Activated CD4-positive, alpha-beta memory T cell treated with anti-CD3 and anti-CD28 coated beads for 36 hours (primary cell): ENCODE measurements at regions of chr17 and their contacts with region 1.

Region 1: GRCh38 chr17:781805-782731 is at the starts of genes GLOD4 and MRM3:
- DNase-seq: peak; percentile 95
- H3K4me3 Mint-ChIP-seq: peak within 1 kb of the TSS; percentile 97
- H3K27ac Mint-ChIP-seq: peak within 1 kb of the TSS; percentile 93
- H3K4me1 Mint-ChIP-seq: peaks cover 37% of the 10 kb centered on the region
- H3K27me3 Mint-ChIP-seq: no peaks in the 10 kb centered on the region
- total RNA-seq, gene GLOD4: 56.3 to 66.5 TPM
- total RNA-seq, gene MRM3: 24.6 to 26.1 TPM

Region 2: DNA sequence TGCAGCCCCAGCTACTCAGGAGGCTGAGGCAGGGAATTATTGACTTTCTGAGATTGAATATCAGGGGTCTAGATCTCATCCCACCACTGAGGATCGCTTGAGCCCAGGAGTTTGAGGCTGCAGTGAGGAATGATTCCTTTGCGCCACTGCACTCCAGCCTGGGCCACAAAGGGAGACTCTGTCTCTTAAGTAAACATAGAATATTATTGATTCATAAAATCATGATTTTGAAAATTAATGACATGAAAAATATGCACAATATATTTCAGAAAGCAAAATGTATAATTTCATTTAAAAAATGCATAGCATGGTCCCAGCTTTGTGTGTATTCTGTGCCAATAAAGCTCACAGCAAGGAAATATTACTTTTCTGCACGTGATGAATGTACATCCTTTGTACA is 65.8 kb before region 1 on chr17:
- CTCF ChIA-PET with region 1: no interaction called
- POLR2A ChIA-PET with region 1: no interaction called
- intact Hi-C with region 1: loop called (anchors 10 kb)
- DNase-seq: no peak
- H3K4me3 Mint-ChIP-seq: no peak overlapping the region
- H3K27ac Mint-ChIP-seq: no peak overlapping the region
- H3K4me1 Mint-ChIP-seq: peaks cover 23% of the 10 kb centered on the region
- H3K27me3 Mint-ChIP-seq: no peaks in the 10 kb centered on the region

Region 3: DNA sequence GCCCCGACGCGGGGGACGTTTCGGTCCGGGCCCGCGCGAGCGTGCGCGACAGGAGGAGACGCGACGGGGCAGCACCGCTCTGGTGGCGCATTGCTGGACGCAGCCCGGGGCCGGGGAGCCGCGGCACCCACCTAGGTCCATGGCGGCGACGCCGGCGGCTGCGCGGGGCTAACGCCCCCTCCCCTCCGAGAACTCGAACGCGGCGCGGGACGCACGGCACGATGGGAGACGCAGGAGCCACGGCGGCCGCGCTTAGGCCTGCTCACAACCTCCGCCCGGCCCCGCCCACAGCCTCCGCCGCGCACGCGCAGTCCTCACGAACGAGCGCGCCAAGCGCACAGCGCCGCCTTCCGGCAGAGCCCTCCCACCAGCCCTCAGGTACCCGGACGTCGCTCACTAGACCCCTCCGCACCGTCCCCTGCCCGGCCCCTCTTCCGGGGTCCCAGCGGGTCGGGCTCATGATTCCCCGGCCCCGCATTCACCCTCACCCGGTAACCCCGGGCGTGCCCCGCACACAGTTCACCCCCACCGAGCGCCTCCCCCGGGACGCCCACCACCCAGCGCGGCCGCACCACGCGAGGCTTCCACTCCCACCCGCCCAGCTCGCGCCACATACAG is 30.0 kb before region 1 on chr17 and contains the start of gene GEMIN4:
- CTCF ChIA-PET with region 1: interaction called, 12 read pairs
- POLR2A ChIA-PET with region 1: interaction called, 12 read pairs
- intact Hi-C with region 1: loop called (anchors 2 kb)
- DNase-seq: peak; percentile 98
- H3K4me3 Mint-ChIP-seq: peak within 1 kb of the TSS; percentile 97
- H3K27ac Mint-ChIP-seq: peak within 1 kb of the TSS; percentile 87
- H3K4me1 Mint-ChIP-seq: peaks cover 35% of the 10 kb centered on the region
- H3K27me3 Mint-ChIP-seq: no peaks in the 10 kb centered on the region
- total RNA-seq, gene GEMIN4: 38.8 to 39.6 TPM

Region 4: GRCh38 chr17:979538-980405 is 197.7 kb after region 1 on chr17 and contains the start of gene NXN:
- CTCF ChIA-PET with region 1: interaction called, 20 read pairs
- POLR2A ChIA-PET with region 1: interaction called, 8 read pairs
- intact Hi-C with region 1: loop called (anchors 5 kb)
- DNase-seq: peak; percentile 90
- H3K4me3 Mint-ChIP-seq: peak within 1 kb of the TSS; percentile 63
- H3K27ac Mint-ChIP-seq: no peak within 1 kb of the TSS
- H3K4me1 Mint-ChIP-seq: peaks cover 11% of the 10 kb centered on the region
- H3K27me3 Mint-ChIP-seq: peaks cover 26% of the 10 kb centered on the region
- total RNA-seq, gene NXN: 0.31 to 0.33 TPM